Naive thymus-derived CD4-positive, alpha-beta T cell (primary cell): ENCODE measurements at regions of chr2 and their contacts with region 1.

Region 1: DNA sequence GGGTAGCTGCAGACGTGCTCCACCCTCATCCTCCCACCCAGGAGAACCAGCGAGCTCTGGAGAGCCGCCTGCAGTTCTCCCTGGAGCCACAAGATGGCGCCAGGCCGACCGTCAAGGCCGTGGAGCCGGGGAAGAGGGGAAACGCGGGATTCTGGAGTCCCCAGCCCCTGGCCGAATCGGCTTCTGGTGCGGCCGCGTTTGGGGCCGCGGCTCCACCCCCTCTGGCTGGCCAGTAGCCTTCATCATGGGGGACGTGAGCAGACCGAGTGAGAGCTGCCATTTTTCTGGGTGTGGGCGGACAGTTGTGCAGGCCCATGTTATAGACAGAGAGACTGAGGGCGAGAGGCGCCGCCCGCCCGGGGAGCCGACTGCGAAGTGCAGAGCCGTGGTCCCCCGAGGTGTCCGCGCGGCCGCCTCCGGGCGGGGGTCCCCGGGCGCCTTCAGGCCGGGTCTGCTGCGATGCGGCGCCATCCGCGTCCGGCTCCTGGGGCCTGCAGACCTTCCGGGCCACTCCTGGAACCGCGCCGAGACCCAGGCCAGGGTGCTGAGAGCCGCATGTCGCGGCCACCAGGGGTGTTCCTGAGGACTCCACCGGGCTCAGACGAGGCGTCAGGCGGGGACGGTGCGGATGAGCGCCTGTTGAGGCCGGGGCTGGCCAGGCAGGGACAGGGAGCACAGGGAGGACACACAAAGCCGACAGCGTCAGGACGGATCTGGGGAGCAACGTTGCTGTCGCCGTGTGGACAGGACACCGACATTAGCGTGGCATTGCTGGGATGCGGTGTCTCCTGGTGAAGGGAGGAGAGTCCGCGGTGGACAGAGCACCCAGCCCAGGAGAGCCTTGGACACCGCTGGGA is 418.2 kb upstream of the HS6ST1 start:
- DNase-seq: peak in 8 of 9 donors; percentile 5 to 72 (median 45)
- ATAC-seq: peak; percentile 61
- H3K4me3 ChIP-seq: no peak overlapping the region
- H3K4me3 Mint-ChIP-seq: peak overlapping the region in 8 of 10 donors; percentile 10 to 56 (median 40)
- H3K27ac ChIP-seq: no peak overlapping the region
- H3K27ac Mint-ChIP-seq: no peak overlapping the region
- H3K4me1 ChIP-seq: peaks cover 0 to 5% of the 10 kb centered on the region in 2 donors
- H3K4me1 Mint-ChIP-seq: peaks cover 4 to 13% (median 11%) of the 10 kb centered on the region in 7 donors
- H3K27me3 ChIP-seq: no peaks in the 10 kb centered on the region
- H3K27me3 Mint-ChIP-seq: peaks cover 9 to 60% (median 23%) of the 10 kb centered on the region in 5 donors

Region 2: GRCh38 chr2:129923265-129924091 is 1186.6 kb after region 1 on chr2:
- CTCF ChIA-PET with region 1: no interaction called
- POLR2A ChIA-PET with region 1: no interaction called
- intact Hi-C with region 1: loop called in 1 of 2 experiments (anchors 5 kb)
- DNase-seq: peak in 4 of 9 donors; percentile 3 to 15 (median 8)
- ATAC-seq: peak; percentile 46
- H3K4me3 ChIP-seq: no peak overlapping the region
- H3K4me3 Mint-ChIP-seq: peak overlapping the region in 8 of 10 donors; percentile 22 to 78 (median 49)
- H3K27ac ChIP-seq: no peak overlapping the region
- H3K27ac Mint-ChIP-seq: peak overlapping the region in 1 of 9 donors; percentile 9
- H3K4me1 ChIP-seq: no peaks in the 10 kb centered on the region
- H3K4me1 Mint-ChIP-seq: peaks cover 0 to 7% (median 6%) of the 10 kb centered on the region in 7 donors
- H3K27me3 ChIP-seq: no peaks in the 10 kb centered on the region
- H3K27me3 Mint-ChIP-seq: peaks cover 30 to 46% (median 42%) of the 10 kb centered on the region in 5 donors